ENCODE measurements at regions of chr2 and their contacts with region 1.

Region 1: GRCh38 chr2:118847497-118848172 is at the start of gene EN1:
- DNase-seq: peak in 1 of 2 experiments; percentile 85
- H3K4me3 ChIP-seq: peak within 1 kb of the TSS; percentile 19 to 57 (median 26); a peak in 6 of 8 replicates
- H3K27ac ChIP-seq: no peak within 1 kb of the TSS
- H3K4me1 ChIP-seq: peaks cover 3 to 49% (median 32%) of the 10 kb centered on the region in 4 experiments
- H3K27me3 ChIP-seq: peaks cover 92 to 99% (median 95%) of the 10 kb centered on the region in 4 experiments
- CTCF ChIP-seq: no peak
- EP300 ChIP-seq: no peak
- POLR2A ChIP-seq: no peak
- RAD21 ChIP-seq: no peak
- total RNA-seq, gene EN1: not detected in 2 replicates

Region 2: GRCh38 chr2:118835746-118836410 is 11.8 kb before region 1 on chr2:
- CTCF ChIA-PET with region 1: interaction called, 84 read pairs
- POLR2A ChIA-PET with region 1: interaction called, 4 read pairs
- DNase-seq: no peak
- H3K4me3 ChIP-seq: peak overlapping the region; percentile 32 to 63 (median 44)
- H3K27ac ChIP-seq: no peak overlapping the region
- H3K4me1 ChIP-seq: peaks cover 5 to 39% (median 24%) of the 10 kb centered on the region in 4 experiments
- H3K27me3 ChIP-seq: peaks cover 97 to 100% (median 99%) of the 10 kb centered on the region in 4 experiments
- CTCF ChIP-seq: no peak
- EP300 ChIP-seq: no peak
- POLR2A ChIP-seq: no peak
- RAD21 ChIP-seq: no peak